ENCODE measurements at regions of chr6 and their contacts with region 1.

Region 1: DNA sequence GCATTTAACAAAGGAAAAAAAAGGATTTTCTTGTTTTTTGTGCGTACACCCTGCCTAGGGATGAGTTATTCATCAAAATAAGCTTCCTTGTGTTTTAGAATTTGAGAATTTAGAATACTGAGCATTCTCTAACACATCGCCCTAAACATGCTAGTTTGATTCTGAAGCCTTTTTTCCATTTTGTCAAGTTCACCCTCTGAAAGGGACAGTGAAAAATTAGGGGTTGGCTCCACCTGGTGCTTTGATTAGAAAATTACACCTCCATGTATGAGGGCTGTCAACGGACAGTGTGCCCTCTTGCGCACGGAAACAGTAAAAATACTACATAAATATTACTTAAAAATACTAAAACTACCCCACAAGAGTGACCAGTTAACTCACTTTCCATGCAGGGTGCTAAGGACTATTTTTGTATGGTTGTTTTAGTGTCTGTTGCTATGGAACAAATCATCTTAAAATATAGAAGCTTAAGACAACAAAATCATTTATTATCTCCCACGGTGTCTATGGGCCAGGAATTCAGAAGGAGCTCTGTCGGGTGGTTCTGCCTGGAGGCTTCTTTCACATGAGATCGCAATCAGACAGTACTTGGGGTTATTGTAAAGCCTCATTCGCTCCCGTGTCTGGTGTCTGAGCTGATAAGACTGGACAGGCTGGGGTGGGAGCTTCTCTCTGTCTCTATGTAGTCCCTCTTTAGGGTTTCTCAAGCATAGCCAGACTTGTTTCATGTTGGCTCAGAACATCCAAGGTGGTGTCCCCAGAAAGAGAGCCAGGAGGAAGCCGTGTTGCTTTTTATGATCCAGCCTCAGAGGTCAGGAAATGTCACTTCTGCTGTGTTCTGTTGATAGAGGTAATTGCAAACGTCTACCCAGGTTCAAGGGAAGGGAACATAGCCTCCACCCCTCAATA is 41.1 kb upstream of the TMEM170B start:
- DNase-seq: peak in 1 of 2 donors; percentile 81
- ATAC-seq: peak; percentile 84 to 95 (median 92)
- H3K4me3 ChIP-seq: no peak overlapping the region
- H3K27ac ChIP-seq: peak overlapping the region in 6 of 10 donors; percentile 32 to 73 (median 44)
- H3K4me1 ChIP-seq: peaks cover 0 to 32% (median 10%) of the 10 kb centered on the region in 9 donors
- H3K27me3 ChIP-seq: no peaks in the 10 kb centered on the region
- CTCF ChIP-seq: peak; percentile 83 to 98 (median 93)

Region 2: GRCh38 chr6:10954590-10955010 is 541.8 kb before region 1 on chr6:
- intact Hi-C with region 1: loop called in 4 of 10 experiments (anchors 5 to 10 kb)
- DNase-seq: peak; percentile 73 to 78
- ATAC-seq: peak in 7 of 8 donors; percentile 51 to 85 (median 67)
- H3K4me3 ChIP-seq: no peak overlapping the region
- H3K27ac ChIP-seq: no peak overlapping the region
- H3K4me1 ChIP-seq: no peaks in the 10 kb centered on the region
- H3K27me3 ChIP-seq: peaks cover 0 to 7% (median 0%) of the 10 kb centered on the region in 7 donors
- CTCF ChIP-seq: peak; percentile 41 to 84 (median 70)

Region 3: GRCh38 chr6:11172501-11173332 is 323.7 kb before region 1 on chr6:
- intact Hi-C with region 1: loop called in 7 of 10 experiments (anchors 1 to 10 kb)
- DNase-seq: peak; percentile 65 to 73
- ATAC-seq: peak in 7 of 8 donors; percentile 44 to 85 (median 67)
- H3K4me3 ChIP-seq: peak overlapping the region in 1 of 10 donors; percentile 19
- H3K27ac ChIP-seq: peak overlapping the region in 1 of 10 donors; percentile 13
- H3K4me1 ChIP-seq: peaks cover 0 to 27% (median 9%) of the 10 kb centered on the region in 9 donors
- H3K27me3 ChIP-seq: no peaks in the 10 kb centered on the region
- CTCF ChIP-seq: peak; percentile 73 to 92 (median 86)

Region 4: GRCh38 chr6:11241793-11242201 is 254.6 kb before region 1 on chr6:
- intact Hi-C with region 1: loop called in 7 of 10 experiments (anchors 5 to 10 kb)
- DNase-seq: peak; percentile 67 to 73
- ATAC-seq: peak; percentile 80 to 95 (median 90)
- H3K4me3 ChIP-seq: no peak overlapping the region
- H3K27ac ChIP-seq: peak overlapping the region in 1 of 10 donors; percentile 4
- H3K4me1 ChIP-seq: peaks cover 0 to 27% (median 8%) of the 10 kb centered on the region in 9 donors
- H3K27me3 ChIP-seq: no peaks in the 10 kb centered on the region
- CTCF ChIP-seq: peak; percentile 26 to 77 (median 54)

Region 5: DNA sequence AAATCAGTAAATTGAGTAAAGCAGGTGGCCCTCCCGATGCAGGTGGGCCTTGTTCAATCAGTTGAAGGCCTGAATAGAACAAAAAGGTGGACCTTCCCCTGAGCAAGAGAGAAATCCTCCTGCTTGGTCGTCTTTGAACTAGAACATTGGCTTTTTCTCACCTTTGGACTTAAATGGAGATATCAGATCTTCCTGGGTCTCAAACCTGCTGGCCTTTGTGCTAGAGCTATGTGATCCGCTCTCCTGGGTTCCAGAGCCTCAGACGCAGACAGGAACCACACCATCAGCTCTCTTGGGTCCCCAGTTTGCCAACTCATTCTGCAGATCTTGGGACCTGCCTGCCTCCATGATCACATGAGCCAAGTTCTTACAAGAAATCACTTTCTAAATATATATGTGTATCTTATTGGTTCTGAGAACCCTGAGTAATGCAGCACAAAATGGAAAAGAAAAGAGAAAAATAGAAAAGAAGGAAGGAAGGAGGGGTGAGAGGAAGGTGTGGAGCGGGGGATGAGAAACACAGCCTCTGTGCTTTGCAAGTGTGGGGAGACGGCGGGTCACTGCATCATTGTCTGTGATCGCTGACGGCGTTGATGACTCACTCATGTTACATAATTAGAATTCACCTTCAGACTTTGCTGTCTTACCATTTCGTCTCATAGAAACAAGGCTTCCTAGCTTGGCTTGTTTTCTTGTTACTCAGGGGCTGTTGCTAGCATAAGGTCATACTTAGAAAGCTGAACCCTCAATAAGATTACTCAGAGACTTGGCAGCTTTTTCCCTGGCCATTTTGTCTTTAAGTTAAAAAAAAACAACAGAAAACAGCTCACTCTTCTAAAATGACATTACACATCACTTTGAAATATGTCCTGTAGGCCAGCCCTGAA is 178.3 kb before region 1 on chr6:
- intact Hi-C with region 1: no loop called
- DNase-seq: peak; percentile 29 to 62
- ATAC-seq: peak; percentile 65 to 91 (median 78)
- H3K4me3 ChIP-seq: no peak overlapping the region
- H3K27ac ChIP-seq: peak overlapping the region in 9 of 10 donors; percentile 12 to 71 (median 57)
- H3K4me1 ChIP-seq: peaks cover 0 to 44% (median 17%) of the 10 kb centered on the region in 9 donors
- H3K27me3 ChIP-seq: no peaks in the 10 kb centered on the region
- CTCF ChIP-seq: no peak

Region 6: DNA sequence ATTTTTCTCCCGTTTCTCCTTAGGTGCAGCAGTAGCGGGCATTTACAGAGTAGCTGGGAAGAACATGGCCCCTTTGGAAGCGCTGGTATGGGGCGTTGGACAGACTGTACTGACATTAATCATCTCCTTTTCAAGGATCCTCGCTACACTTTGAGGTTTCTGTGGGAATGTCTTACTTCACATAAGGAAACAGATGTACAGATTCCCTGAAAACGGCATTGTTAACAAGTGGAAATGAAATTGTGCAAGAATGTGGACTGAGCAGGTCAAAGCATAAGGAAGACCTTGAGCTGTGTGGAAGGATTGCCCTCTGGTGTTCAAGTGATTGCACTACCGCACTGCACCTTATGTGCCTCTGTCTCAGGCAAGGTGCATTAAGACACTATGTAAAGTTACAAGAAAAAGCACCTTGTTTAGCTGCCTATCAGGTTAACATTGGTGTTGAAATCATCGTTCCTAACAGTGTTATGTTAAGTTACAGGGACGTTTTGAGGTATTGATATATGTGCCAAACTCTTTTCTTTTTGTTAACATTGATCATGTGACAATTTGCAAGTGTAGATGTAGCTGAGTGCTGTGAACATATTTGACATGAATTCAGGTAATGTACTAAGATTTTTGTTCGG is 79.1 kb after region 1 on chr6:
- intact Hi-C with region 1: loop called in 1 of 10 experiments (anchors 5 kb)
- DNase-seq: peak in 1 of 2 donors; percentile 56
- ATAC-seq: peak; percentile 85 to 98 (median 92)
- H3K4me3 ChIP-seq: peak overlapping the region in 1 of 10 donors; percentile 13
- H3K27ac ChIP-seq: peak overlapping the region in 1 of 10 donors; percentile 22
- H3K4me1 ChIP-seq: peaks cover 0 to 6% (median 0%) of the 10 kb centered on the region in 9 donors
- H3K27me3 ChIP-seq: no peaks in the 10 kb centered on the region
- CTCF ChIP-seq: peak; percentile 66 to 88 (median 81)

Measured in heart right ventricle (tissue), 16 donors.